ENCODE measurements at regions of chr6 and their contacts with region 1.

Region 1: DNA sequence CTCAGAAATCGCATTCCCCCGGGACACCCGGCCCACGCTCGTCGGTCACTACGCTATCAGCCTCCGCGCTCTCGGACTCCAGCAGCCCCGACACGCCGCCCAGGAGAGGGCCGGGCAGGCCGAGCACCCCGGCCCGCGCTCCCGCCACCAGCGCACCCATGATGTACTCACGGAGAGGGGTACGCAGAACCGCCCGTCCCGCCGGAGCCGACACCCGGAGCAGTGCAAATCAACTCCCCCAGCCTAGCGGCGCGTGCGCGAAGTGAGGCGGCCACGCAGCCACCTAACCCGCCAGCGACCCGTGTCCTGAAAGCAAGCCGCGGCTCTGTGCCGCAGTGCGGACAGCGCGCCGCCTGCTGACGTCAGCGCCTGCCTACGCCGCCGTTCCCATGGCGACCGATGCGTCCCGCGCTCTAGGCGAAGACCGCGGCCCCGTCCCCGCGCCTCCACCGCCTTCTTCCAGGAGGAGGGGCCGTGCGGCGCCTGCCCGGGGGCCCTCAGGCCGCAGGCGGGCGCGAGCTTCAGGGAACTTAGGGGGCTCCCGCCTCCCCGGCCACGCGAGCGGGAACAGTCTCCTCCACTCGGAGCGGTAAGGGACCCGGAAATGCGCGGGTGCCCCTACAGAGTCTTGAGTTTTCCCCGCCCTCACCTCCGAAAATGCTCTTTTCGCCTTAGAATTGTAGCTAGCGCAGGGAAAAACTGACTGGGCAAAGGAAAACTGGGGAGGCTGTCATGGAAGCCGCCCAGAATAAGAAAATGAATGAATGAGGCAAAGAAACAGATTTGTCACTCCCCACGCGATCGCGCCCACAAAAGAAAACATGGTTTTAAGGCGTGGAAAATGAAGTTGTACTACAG is at the start of gene AHI1:
- H3K4me3 Mint-ChIP-seq: no peak within 1 kb of the TSS
- H3K27ac Mint-ChIP-seq: no peak within 1 kb of the TSS
- H3K4me1 Mint-ChIP-seq: peaks cover 7% of the 10 kb centered on the region
- H3K27me3 Mint-ChIP-seq: no peaks in the 10 kb centered on the region

Region 2: DNA sequence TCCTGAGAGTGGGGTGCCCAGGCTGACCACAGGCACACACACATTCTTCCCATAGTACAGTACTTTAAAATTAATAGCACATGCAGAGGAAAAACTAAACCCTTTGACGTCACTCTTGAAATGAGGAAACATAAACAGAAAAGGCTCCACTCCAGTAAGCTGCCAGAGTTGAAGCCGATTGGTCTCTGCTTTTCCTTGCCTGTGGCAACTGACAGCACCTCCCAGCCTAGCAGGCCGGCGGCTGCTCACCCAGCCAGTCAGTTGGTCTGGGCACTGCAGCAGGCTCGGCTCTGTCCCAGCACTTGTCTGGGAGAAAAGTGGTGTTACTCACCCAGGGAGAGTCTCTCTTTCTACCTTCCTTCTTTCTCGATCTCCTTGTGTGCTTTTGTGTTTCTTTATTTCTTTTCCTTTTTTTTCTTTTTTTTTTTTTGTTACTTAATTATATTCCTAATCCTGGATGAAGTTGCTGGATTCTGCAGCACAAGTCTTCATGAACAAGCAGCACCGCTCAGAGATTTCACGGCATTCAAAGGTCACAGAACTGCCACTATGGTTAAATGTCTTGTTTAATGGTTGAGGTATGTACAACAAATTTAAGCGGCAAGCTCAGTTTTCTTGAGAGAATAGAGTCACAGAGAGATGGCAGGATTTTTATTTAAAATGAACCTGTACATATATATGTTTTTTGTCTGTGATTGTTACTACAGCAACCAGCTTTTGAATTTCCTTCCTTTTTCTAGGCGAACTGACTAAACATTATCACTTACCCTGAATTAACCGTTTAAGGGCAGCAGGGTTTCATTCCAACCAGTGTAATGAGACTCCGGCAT is 354.0 kb after region 1 on chr6 and contains the start of gene PDE7B:
- intact Hi-C with region 1: loop called (anchors 10 kb)
- H3K4me3 Mint-ChIP-seq: peak within 1 kb of the TSS; percentile 67
- H3K27ac Mint-ChIP-seq: peak within 1 kb of the TSS; percentile 82
- H3K4me1 Mint-ChIP-seq: peaks cover 11% of the 10 kb centered on the region
- H3K27me3 Mint-ChIP-seq: no peaks in the 10 kb centered on the region

Region 3: DNA sequence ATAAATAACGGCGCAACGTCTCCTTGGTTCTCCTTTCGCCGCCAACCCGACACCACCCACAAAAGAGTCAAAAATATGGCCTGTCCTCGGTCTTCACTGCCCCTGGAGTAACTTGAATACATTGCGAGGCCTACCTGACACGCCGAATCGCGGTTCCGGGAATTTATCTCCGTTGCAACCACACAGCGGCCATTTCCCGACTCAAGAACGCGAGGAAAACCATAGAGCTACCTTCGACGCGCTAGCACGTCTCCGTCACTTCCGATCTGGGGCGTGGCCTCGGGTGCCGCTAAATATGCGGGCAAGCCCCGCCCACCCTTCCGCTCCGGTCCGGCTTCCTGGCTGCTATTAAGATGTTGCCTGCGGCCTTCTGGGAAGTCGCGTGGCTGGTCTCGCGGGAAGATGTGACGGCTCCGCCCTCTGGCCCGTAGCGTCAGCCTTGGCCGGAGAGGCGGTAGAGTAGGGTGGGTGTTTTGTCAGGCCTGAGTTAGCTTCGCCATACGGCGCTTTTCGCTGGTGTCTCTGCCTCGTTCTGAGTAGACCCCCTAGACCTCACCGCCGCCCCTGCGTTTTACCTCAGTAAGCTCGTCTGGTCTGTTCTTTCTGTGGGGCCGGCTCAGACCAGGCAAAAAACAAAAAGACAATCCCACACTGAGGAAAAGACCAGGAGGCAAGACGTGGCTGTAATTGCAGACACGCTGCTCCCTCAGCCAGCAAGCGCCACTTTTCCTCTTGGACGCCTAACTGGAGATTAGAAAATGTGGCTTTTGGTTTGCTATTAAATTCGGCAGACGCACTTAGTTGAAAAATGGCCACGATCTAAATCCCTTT is 792.2 kb after region 1 on chr6 and contains the start of gene BCLAF1:
- intact Hi-C with region 1: loop called (anchors 5 kb)
- H3K4me3 Mint-ChIP-seq: peak within 1 kb of the TSS; percentile 99
- H3K27ac Mint-ChIP-seq: peak within 1 kb of the TSS; percentile 100
- H3K4me1 Mint-ChIP-seq: peaks cover 34% of the 10 kb centered on the region
- H3K27me3 Mint-ChIP-seq: no peaks in the 10 kb centered on the region

Measured in dendritic cell treated with granulocyte-macrophage colony-stimulating factor and Interleukin-4, amounts not matched to agents 40 ng/mL and 50 ng/mL, for 4 days (primary cell).